Endothelial cell of umbilical vein (primary cell): ENCODE measurements at regions of chr11 and their contacts with region 1.

Region 1: DNA sequence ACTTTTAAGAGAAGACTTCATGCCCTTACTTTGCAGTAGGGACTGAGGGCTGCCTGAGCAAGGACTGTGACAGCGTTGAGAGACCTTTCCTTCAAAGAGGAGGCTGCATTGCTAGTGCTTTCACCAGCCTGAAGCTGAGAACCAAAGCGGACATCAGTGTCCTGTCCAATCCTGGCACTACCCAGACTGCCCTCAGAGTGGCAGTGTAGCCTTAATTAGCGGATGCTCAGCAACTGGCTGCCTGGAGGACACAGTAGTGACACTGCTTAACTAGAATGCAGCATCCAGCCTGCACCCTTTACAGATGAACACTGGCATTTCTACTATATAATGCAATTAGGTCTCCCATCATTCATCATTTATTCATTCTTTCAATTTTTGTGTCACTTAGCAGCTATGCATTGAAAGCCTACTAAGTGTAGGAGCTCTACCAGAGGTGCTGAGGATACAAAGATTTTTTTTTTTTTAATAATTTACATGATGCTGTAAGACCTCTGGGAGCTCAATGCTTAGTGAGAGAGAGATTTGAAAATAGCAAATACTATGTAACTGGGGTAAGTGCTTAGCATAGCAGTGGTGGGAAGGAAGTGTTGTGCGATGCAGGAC is 36.9 kb upstream of the SLC36A4 start:
- DNase-seq: peak; percentile 77
- H3K4me3 ChIP-seq: no peak overlapping the region
- H3K27ac ChIP-seq: no peak overlapping the region
- H3K4me1 ChIP-seq: no peaks in the 10 kb centered on the region
- H3K27me3 ChIP-seq: peaks cover 4 to 7% of the 10 kb centered on the region in 2 experiments
- CTCF ChIP-seq: peak; percentile 74 to 85
- POLR2A ChIP-seq: no peak

Region 2: DNA sequence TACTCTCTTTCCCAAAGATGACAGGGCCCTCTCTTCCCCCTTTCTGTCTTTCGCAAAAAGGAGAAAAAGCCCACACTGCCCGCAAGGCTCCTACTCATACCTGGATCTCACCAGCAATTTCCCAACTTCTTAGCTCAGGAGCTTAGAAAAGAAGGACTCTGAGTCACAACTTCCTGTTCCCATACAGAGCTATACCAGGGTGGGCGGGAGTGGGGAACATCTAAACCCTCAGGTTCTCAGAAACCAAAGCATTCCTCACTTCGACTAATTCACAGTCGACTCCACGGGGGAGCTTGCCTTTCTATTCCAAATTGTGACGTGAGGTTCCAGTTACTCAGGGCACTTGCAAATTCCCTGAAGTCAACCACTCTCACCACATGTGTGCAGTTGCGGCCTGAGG is 203.3 kb before region 1 on chr11:
- CTCF ChIA-PET with region 1: no interaction called
- POLR2A ChIA-PET with region 1: no interaction called
- dilution Hi-C with region 1: no loop called
- intact Hi-C with region 1: no loop called
- DNase-seq: no peak
- H3K4me3 ChIP-seq: no peak overlapping the region
- H3K27ac ChIP-seq: no peak overlapping the region
- H3K4me1 ChIP-seq: no peaks in the 10 kb centered on the region
- H3K27me3 ChIP-seq: no peaks in the 10 kb centered on the region
- CTCF ChIP-seq: no peak
- POLR2A ChIP-seq: no peak

Region 3: GRCh38 chr11:93248602-93249001 is 13.9 kb after region 1 on chr11:
- CTCF ChIA-PET with region 1: interaction called, 15 read pairs
- POLR2A ChIA-PET with region 1: no interaction called
- dilution Hi-C with region 1: no loop called
- intact Hi-C with region 1: no loop called
- DNase-seq: peak; percentile 15
- H3K4me3 ChIP-seq: no peak overlapping the region
- H3K27ac ChIP-seq: no peak overlapping the region
- H3K4me1 ChIP-seq: no peaks in the 10 kb centered on the region
- H3K27me3 ChIP-seq: no peaks in the 10 kb centered on the region
- CTCF ChIP-seq: peak in 1 of 2 donors; percentile 5
- POLR2A ChIP-seq: no peak

Region 4: GRCh38 chr11:93652161-93652597 is 417.5 kb after region 1 on chr11:
- CTCF ChIA-PET with region 1: interaction called, 195 read pairs
- POLR2A ChIA-PET with region 1: no interaction called
- dilution Hi-C with region 1: no loop called
- intact Hi-C with region 1: loop called (anchors 1 kb)
- DNase-seq: peak; percentile 56
- H3K4me3 ChIP-seq: no peak overlapping the region
- H3K27ac ChIP-seq: no peak overlapping the region
- H3K4me1 ChIP-seq: no peaks in the 10 kb centered on the region
- H3K27me3 ChIP-seq: peaks cover 22 to 24% of the 10 kb centered on the region in 2 experiments
- CTCF ChIP-seq: peak; percentile 51 to 52
- POLR2A ChIP-seq: no peak

Region 5: DNA sequence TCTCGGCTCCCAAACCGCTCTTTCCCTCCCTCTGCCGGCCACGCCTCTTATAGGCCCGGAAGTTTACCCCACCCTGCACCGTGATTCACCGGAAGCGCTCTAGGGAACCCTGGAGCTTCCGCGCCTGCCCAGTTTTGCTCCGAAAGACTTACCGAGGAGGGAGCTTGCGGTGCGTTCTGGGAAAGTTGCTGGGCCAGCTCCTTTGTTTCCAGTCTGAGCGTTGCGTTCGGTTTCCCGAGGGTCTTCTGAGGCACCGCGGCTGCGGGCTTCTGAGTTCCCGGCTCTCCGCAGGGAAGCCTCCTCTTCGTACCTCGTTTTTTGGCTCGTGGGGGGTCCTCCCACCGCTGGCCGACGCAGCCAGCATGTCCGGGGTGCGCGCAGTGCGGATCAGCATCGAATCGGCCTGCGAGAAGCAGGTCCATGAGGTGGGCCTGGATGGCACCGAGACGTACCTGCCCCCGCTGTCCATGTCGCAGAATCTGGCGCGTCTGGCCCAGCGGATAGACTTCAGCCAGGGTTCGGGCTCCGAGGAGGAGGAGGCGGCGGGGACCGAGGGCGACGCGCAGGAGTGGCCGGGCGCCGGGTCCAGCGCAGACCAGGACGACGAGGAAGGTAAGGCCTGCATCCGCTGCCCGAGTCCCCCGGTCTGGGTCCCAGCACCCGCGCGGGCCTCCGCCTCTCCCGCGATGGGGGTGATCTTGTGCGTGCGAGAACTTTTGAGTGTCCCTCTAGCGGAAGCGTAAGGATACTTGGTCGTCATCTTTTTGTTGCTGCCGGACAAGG is 549.6 kb after region 1 on chr11 and contains the start of gene MED17:
- CTCF ChIA-PET with region 1: no interaction called
- POLR2A ChIA-PET with region 1: no interaction called
- dilution Hi-C with region 1: no loop called
- intact Hi-C with region 1: loop called (anchors 10 kb)
- DNase-seq: peak; percentile 93
- H3K4me3 ChIP-seq: peak within 1 kb of the TSS; percentile 81 to 96 (median 85)
- H3K27ac ChIP-seq: peak within 1 kb of the TSS; percentile 87
- H3K4me1 ChIP-seq: peaks cover 22% of the 10 kb centered on the region
- H3K27me3 ChIP-seq: no peaks in the 10 kb centered on the region
- CTCF ChIP-seq: peak; percentile 16 to 32
- POLR2A ChIP-seq: peak; percentile 94
- total RNA-seq, gene MED17: 33.5 and 40.6 TPM in 2 replicates

Region 6: GRCh38 chr11:94504689-94505293 is 1270.1 kb after region 1 on chr11:
- CTCF ChIA-PET with region 1: interaction called, 9 read pairs
- POLR2A ChIA-PET with region 1: no interaction called
- dilution Hi-C with region 1: no loop called
- intact Hi-C with region 1: loop called (anchors 5 kb)
- DNase-seq: peak; percentile 66
- H3K4me3 ChIP-seq: no peak overlapping the region
- H3K27ac ChIP-seq: no peak overlapping the region
- H3K4me1 ChIP-seq: no peaks in the 10 kb centered on the region
- H3K27me3 ChIP-seq: peaks cover 0 to 2% of the 10 kb centered on the region in 2 experiments
- CTCF ChIP-seq: peak; percentile 33 to 40
- POLR2A ChIP-seq: no peak